ENCODE measurements at regions of chr12 and their contacts with region 1.

Region 1: GRCh38 chr12:6752921-6753771 is at the start of gene MLF2:
- DNase-seq: peak; percentile 99
- H3K4me3 ChIP-seq: peak within 1 kb of the TSS; percentile 84 to 91
- H3K27ac ChIP-seq: peak within 1 kb of the TSS; percentile 97 to 98
- H3K4me1 ChIP-seq: peaks cover 14 to 18% of the 10 kb centered on the region in 2 experiments
- H3K27me3 ChIP-seq: no peaks in the 10 kb centered on the region
- CTCF ChIP-seq: no peak; the same call in 1 of the 2 replicates
- EP300 ChIP-seq: peak in 1 of 2 experiments; percentile 22; a peak in 2 of 4 replicates
- RAD21 ChIP-seq: no peak
- polyA plus RNA-seq, gene MLF2: 535 and 624 TPM in 2 replicates

Region 2: GRCh38 chr12:6161124-6161882 is 591.8 kb before region 1 on chr12:
- CTCF ChIA-PET with region 1: no interaction called
- POLR2A ChIA-PET with region 1: no interaction called
- DNase-seq: peak; percentile 36
- H3K4me3 ChIP-seq: no peak overlapping the region
- H3K27ac ChIP-seq: peak overlapping the region in 1 of 2 experiments; percentile 67; a peak in 1 of 4 replicates
- H3K4me1 ChIP-seq: peaks cover 0 to 27% of the 10 kb centered on the region in 2 experiments; a peak in 1 of 4 replicates
- H3K27me3 ChIP-seq: no peaks in the 10 kb centered on the region
- CTCF ChIP-seq: no peak
- EP300 ChIP-seq: no peak
- RAD21 ChIP-seq: no peak

Region 3: DNA sequence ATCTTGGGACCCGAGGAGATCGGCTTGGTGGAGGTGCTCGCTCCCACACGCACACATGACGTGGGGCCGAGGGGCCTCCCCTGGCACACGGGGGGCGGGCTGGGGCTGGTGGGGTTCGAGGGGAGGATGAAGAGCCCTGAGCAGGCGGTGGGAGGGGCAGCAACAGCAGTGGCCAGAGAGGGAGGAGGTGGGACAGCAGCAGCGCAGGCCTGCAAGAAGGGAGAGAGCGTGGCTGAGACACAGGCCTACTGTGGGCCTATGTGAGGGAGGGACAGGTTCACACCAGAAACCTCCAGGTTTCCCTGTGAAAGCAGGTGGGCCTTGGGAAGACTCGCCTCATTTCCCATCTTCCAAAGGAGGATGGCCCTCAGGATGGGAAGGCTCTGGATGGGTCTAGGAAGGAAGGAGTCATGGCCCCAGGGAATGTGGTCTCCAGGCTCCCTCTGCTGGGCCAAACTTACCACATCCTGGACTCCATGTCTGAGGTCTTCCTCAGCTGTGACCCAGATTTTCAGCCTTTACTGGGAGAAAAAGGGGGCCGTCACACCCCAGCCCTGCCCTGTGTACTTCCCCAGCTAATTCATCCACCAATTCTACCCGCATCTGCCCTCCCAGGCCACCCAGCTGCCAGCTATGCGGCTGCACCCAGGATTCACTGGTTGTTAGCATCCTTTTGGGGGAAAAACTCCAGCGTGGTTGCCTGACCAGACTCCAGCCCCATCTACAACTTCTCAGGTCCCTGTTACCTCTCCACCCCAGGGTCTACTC is 55.4 kb before region 1 on chr12:
- CTCF ChIA-PET with region 1: interaction called, 19 read pairs
- POLR2A ChIA-PET with region 1: no interaction called
- DNase-seq: peak; percentile 75
- H3K4me3 ChIP-seq: no peak overlapping the region; a peak in 1 of 4 replicates
- H3K27ac ChIP-seq: peak overlapping the region in 1 of 2 experiments; percentile 12; a peak in 2 of 4 replicates
- H3K4me1 ChIP-seq: peaks cover 6 to 13% of the 10 kb centered on the region in 2 experiments; a peak in 2 of 4 replicates
- H3K27me3 ChIP-seq: no peaks in the 10 kb centered on the region
- CTCF ChIP-seq: peak; percentile 68
- EP300 ChIP-seq: no peak
- RAD21 ChIP-seq: peak; percentile 59

Region 4: GRCh38 chr12:6764011-6764828 is 11.1 kb after region 1 on chr12:
- CTCF ChIA-PET with region 1: interaction called, 343 read pairs
- POLR2A ChIA-PET with region 1: interaction called, 89 read pairs
- DNase-seq: peak; percentile 88
- H3K4me3 ChIP-seq: peak overlapping the region; percentile 26 to 47
- H3K27ac ChIP-seq: peak overlapping the region; percentile 87 to 99
- H3K4me1 ChIP-seq: peaks cover 20 to 37% of the 10 kb centered on the region in 2 experiments
- H3K27me3 ChIP-seq: no peaks in the 10 kb centered on the region
- CTCF ChIP-seq: no peak
- EP300 ChIP-seq: peak; percentile 50 to 83; a peak in 3 of 4 replicates
- RAD21 ChIP-seq: no peak

Region 5: GRCh38 chr12:6810758-6811157 is 57.6 kb after region 1 on chr12:
- CTCF ChIA-PET with region 1: interaction called, 26 read pairs
- POLR2A ChIA-PET with region 1: no interaction called
- DNase-seq: no peak
- H3K4me3 ChIP-seq: no peak overlapping the region
- H3K27ac ChIP-seq: no peak overlapping the region
- H3K4me1 ChIP-seq: peaks cover 0 to 1% of the 10 kb centered on the region in 2 experiments; a peak in 1 of 4 replicates
- H3K27me3 ChIP-seq: no peaks in the 10 kb centered on the region
- CTCF ChIP-seq: no peak
- EP300 ChIP-seq: no peak
- RAD21 ChIP-seq: no peak

Region 6: GRCh38 chr12:6833189-6833890 is 80.2 kb after region 1 on chr12:
- CTCF ChIA-PET with region 1: interaction called, 246 read pairs
- POLR2A ChIA-PET with region 1: interaction called, 46 read pairs
- DNase-seq: no peak
- H3K4me3 ChIP-seq: no peak overlapping the region
- H3K27ac ChIP-seq: no peak overlapping the region
- H3K4me1 ChIP-seq: peaks cover 0 to 11% of the 10 kb centered on the region in 2 experiments; a peak in 1 of 4 replicates
- H3K27me3 ChIP-seq: no peaks in the 10 kb centered on the region
- CTCF ChIP-seq: no peak
- EP300 ChIP-seq: no peak
- RAD21 ChIP-seq: no peak

Region 7: GRCh38 chr12:6867413-6868210 is 114.5 kb after region 1 on chr12 and contains the start of gene TPI1:
- CTCF ChIA-PET with region 1: interaction called, 23 read pairs
- POLR2A ChIA-PET with region 1: interaction called, 11 read pairs
- DNase-seq: peak; percentile 98
- H3K4me3 ChIP-seq: peak within 1 kb of the TSS; percentile 91 to 99
- H3K27ac ChIP-seq: peak within 1 kb of the TSS; percentile 84 to 95
- H3K4me1 ChIP-seq: peaks cover 33 to 42% of the 10 kb centered on the region in 2 experiments
- H3K27me3 ChIP-seq: no peaks in the 10 kb centered on the region
- CTCF ChIP-seq: no peak
- EP300 ChIP-seq: no peak; a peak in 1 of 4 replicates
- RAD21 ChIP-seq: no peak
- polyA plus RNA-seq, gene TPI1: 1,175 and 1,316 TPM in 2 replicates

Region 8: DNA sequence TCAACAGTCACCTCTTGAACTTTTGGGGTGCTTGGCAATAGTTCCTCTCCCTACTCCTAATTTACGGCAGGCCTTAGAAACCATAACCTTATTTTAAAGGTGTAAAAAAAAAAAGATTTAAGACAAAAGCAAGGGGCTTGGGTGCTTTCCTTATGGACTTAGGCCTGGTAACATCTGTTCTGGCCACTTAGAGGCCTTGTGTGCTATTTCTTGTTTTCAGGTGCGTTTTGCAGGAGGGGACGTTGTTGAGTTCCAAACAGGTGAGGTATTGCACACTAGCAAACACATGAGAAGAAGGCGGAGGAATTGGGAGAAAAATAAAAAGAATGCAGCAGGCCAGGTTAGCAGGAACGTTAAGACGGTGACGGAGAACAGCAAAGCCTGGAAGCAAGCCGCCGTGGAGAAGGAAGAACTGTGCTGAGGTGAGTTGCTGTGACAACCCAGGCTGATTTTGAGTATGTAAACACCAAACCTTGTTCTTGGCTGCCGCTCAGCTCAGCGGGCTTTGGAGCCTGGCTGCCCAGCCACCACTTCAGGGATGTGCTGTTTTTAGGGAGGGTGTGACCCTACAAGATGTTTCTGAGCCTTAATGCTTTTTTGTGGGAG is 234.9 kb after region 1 on chr12:
- CTCF ChIA-PET with region 1: no interaction called
- POLR2A ChIA-PET with region 1: no interaction called
- DNase-seq: no peak
- H3K4me3 ChIP-seq: no peak overlapping the region
- H3K27ac ChIP-seq: no peak overlapping the region
- H3K4me1 ChIP-seq: no peaks in the 10 kb centered on the region
- H3K27me3 ChIP-seq: no peaks in the 10 kb centered on the region
- CTCF ChIP-seq: no peak
- EP300 ChIP-seq: no peak
- RAD21 ChIP-seq: no peak

Region 9: DNA sequence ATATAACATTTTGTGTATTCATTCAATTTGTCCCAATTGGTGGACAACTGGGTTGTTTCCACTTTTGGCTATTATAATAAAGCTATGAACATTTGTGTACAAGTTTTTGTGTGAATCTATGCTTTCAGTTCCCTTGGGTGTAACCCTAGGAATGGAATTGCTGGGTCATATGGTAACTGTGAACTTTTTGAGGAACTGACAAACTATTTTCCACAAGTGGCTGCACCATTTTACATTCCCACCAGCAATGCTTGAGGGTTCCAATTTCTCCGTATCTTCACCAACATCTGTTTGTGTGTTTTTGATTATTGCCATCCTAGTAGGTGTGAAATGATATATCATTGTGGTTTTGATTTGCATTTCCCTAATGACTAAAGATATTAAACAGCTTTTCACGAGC is 252.2 kb after region 1 on chr12:
- CTCF ChIA-PET with region 1: no interaction called
- POLR2A ChIA-PET with region 1: no interaction called
- DNase-seq: no peak
- H3K4me3 ChIP-seq: no peak overlapping the region
- H3K27ac ChIP-seq: no peak overlapping the region
- H3K4me1 ChIP-seq: no peaks in the 10 kb centered on the region
- H3K27me3 ChIP-seq: no peaks in the 10 kb centered on the region
- CTCF ChIP-seq: no peak
- EP300 ChIP-seq: no peak
- RAD21 ChIP-seq: no peak

Region 10: DNA sequence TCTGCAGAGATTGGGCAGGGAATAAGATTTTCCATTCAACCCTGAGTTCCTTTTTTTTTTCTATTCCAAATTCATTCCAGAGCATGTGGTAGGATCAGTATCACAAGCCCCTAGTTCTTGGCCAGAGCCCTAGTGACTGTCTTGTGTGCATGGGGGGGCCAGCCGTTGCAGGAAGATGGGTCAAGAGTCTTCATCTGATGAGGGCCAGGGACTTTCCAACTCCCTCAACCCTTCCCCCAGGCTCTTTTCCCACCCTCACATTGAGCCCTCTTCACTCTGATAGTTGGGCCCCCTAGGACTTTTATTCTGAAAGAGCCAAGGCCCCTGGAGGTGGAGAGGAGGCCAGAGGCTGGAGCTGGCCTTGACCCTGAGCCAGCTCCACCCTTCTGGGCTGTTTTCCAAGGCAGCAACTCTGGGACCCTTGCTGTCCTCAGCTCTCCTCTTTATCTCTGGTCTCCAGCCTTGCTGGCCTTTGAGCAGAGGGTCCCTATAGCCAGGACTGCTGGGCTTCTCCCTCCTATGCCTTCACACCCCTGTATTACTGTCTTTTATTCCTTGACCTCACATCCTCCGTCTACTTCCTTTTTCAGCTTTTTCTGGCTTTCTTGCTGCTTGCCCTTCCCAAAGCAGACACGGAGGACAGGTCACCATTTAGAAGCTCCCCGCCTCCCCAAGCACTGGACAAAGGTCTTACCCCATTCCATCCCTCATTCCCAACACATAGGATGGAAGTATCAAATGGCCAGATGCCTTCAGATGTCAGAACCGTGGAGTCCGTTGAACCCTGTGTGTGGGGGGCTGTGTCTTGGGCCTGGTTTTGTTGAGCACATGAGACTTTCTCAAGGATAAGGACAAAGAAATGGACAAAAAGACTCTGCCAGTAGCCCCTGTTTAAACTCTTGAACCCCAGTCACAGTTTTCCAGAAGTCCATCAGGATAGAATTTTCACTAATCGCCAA is 369.9 kb after region 1 on chr12:
- CTCF ChIA-PET with region 1: no interaction called
- POLR2A ChIA-PET with region 1: no interaction called
- DNase-seq: no peak
- H3K4me3 ChIP-seq: no peak overlapping the region
- H3K27ac ChIP-seq: no peak overlapping the region
- H3K4me1 ChIP-seq: no peaks in the 10 kb centered on the region
- H3K27me3 ChIP-seq: 0 out of 2 replicates have a peak, but pooled peaks cover 2% of the 10 kb centered on the region
- CTCF ChIP-seq: no peak
- EP300 ChIP-seq: no peak
- RAD21 ChIP-seq: no peak

Measured in SK-N-SH (cell line).